ENCODE measurements at regions of chr5 and their contacts with region 1.

Region 1: GRCh38 chr5:140647042-140647341 is 438 bp downstream of the NDUFA2 start:
- DNase-seq: no peak
- ATAC-seq: no peak
- H3K4me3 Mint-ChIP-seq: peak overlapping the region; percentile 99
- H3K27ac Mint-ChIP-seq: peak overlapping the region; percentile 98
- H3K4me1 Mint-ChIP-seq: peaks cover 38% of the 10 kb centered on the region
- H3K27me3 Mint-ChIP-seq: no peaks in the 10 kb centered on the region
- CTCF ChIP-seq: no peak

Region 2: DNA sequence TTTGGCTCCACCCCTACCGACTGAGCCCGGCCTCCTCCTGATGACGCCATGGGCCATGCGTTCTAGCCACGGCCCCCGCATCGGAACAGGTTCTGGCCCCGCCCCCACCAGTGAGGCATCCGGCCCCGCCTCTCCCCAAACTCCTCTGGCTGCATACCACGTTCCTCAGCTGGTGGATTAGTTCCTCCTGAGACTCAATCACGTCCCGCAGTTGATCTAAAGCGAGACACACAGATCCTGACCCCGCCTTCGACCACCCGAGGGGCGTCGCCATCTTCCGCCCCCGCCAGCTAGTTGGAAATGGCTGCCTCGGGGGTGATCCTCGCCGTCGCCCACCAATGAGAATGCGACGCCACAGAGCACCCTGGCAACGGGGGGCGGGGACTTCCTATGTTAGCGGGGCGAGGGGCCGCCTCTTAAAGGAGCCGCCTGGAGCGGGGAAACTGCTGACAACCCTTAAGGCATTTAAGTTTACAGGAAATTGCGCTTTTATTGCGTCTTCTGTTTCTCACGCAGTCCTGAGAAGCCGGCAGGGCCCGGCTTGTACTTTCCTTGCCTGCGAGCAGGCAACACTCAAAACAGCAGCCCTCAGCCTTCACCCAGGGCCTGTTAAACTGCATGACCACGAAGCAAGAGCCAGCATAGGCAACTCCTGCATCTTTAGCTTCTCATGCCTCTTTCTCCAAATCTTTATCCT is 1243.1 kb before region 1 on chr5 and contains the start of gene SPATA24:
- CTCF ChIA-PET with region 1: no interaction called
- POLR2A ChIA-PET with region 1: no interaction called
- intact Hi-C with region 1: loop called (anchors 5 kb)
- DNase-seq: peak; percentile 93
- ATAC-seq: peak; percentile 84
- H3K4me3 Mint-ChIP-seq: peak within 1 kb of the TSS; percentile 90
- H3K27ac Mint-ChIP-seq: peak within 1 kb of the TSS; percentile 96
- H3K4me1 Mint-ChIP-seq: peaks cover 53% of the 10 kb centered on the region
- H3K27me3 Mint-ChIP-seq: no peaks in the 10 kb centered on the region
- CTCF ChIP-seq: no peak
- total RNA-seq, gene SPATA24: 6.4 and 9.3 TPM in 2 replicates

Region 3: GRCh38 chr5:140564196-140565023 is 82.6 kb before region 1 on chr5 and contains the starts of genes APBB3 and SLC35A4:
- CTCF ChIA-PET with region 1: no interaction called
- POLR2A ChIA-PET with region 1: interaction called, 8 read pairs
- intact Hi-C with region 1: loop called (anchors 1 kb)
- DNase-seq: peak; percentile 89
- ATAC-seq: peak; percentile 90
- H3K4me3 Mint-ChIP-seq: peak within 1 kb of the TSS; percentile 98
- H3K27ac Mint-ChIP-seq: peak within 1 kb of the TSS; percentile 90
- H3K4me1 Mint-ChIP-seq: peaks cover 57% of the 10 kb centered on the region
- H3K27me3 Mint-ChIP-seq: no peaks in the 10 kb centered on the region
- CTCF ChIP-seq: no peak
- total RNA-seq, gene APBB3: 36.0 and 37.5 TPM in 2 replicates
- total RNA-seq, gene SLC35A4: 76.0 and 77.9 TPM in 2 replicates

Region 4: GRCh38 chr5:140664359-140665119 is 17.5 kb after region 1 on chr5 and contains the start of gene WDR55:
- CTCF ChIA-PET with region 1: no interaction called
- POLR2A ChIA-PET with region 1: interaction called, 42 read pairs
- intact Hi-C with region 1: loop called (anchors 1 kb)
- DNase-seq: peak; percentile 91
- ATAC-seq: peak; percentile 98
- H3K4me3 Mint-ChIP-seq: peak within 1 kb of the TSS; percentile 97
- H3K27ac Mint-ChIP-seq: peak within 1 kb of the TSS; percentile 95
- H3K4me1 Mint-ChIP-seq: peaks cover 30% of the 10 kb centered on the region
- H3K27me3 Mint-ChIP-seq: no peaks in the 10 kb centered on the region
- CTCF ChIP-seq: no peak
- total RNA-seq, gene WDR55: 33.8 and 36.9 TPM in 2 replicates

Region 5: DNA sequence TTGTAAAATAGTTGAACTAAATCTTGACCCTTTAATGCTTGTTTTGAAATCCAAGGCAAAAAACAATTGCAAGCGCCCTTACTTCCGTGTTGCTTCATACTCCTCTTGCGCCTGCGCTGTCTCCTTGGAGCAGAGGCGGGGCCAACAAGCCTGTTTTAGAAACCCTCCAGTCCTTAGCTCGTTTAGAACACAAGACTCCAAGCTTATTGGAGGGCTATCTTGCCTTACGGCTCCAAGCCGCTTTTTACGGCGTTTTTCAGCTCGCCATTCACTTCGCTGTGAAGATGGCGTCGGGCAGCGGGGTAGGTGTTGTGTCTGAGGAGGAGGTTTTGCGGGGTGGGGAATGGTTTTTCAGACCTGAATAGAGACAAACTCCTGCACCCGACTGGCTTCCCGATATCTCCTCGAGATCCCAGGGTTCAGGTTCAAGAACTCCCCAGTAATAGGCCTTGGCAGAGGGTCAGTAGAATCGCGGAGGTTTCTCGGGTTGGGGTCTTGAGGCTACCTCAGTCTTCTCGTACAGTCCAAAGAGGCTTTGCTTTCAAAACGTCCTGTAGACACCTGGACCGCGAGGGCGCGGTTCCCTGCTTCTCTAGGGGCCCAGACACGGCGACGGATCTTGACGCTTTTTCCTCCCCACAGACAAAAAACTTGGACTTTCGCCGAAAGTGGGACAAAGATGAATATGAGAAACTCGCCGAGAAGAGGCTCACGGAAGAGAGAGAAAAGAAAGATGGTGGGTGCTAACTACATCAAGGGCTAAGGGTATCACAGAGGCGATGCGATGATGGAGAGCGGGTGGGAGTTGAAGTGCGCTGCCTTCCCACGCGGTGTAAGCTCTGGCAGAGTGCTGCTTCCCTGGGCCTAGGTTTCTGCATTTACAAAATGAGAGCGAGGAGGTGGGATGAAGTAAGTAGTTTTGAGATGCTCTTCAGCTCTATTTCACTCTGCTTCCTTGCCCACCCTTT is 53.5 kb after region 1 on chr5 and contains the start of gene ZMAT2:
- CTCF ChIA-PET with region 1: no interaction called
- POLR2A ChIA-PET with region 1: interaction called, 14 read pairs
- intact Hi-C with region 1: no loop called
- DNase-seq: peak; percentile 77
- ATAC-seq: peak; percentile 100
- H3K4me3 Mint-ChIP-seq: peak within 1 kb of the TSS; percentile 98
- H3K27ac Mint-ChIP-seq: peak within 1 kb of the TSS; percentile 92
- H3K4me1 Mint-ChIP-seq: peaks cover 25% of the 10 kb centered on the region
- H3K27me3 Mint-ChIP-seq: no peaks in the 10 kb centered on the region
- CTCF ChIP-seq: no peak
- total RNA-seq, gene ZMAT2: 67.8 and 70.2 TPM in 2 replicates

Measured in activated B cell treated with CpG ODN at 0.5 μM for 24 hours (primary cell).